Caco-2 (cell line): ENCODE measurements at regions of chr9 and their contacts with region 1.

Region 1: GRCh38 chr9:97038909-97039781 is at the start of gene CTSV:
- DNase-seq: peak; percentile 94 to 97
- H3K4me3 ChIP-seq: peak within 1 kb of the TSS; percentile 75
- H3K4me3 Mint-ChIP-seq: peak within 1 kb of the TSS; percentile 89
- H3K27ac Mint-ChIP-seq: peak within 1 kb of the TSS; percentile 92
- H3K4me1 ChIP-seq: peaks cover 29% of the 10 kb centered on the region
- H3K4me1 Mint-ChIP-seq: peaks cover 17% of the 10 kb centered on the region
- H3K27me3 ChIP-seq: no peaks in the 10 kb centered on the region
- H3K27me3 Mint-ChIP-seq: no peaks in the 10 kb centered on the region
- CTCF ChIP-seq: no peak
- total RNA-seq, gene CTSV: 110 and 127 TPM in 2 replicates

Region 2: GRCh38 chr9:97062417-97062985 is 23.4 kb after region 1 on chr9:
- CTCF ChIA-PET with region 1: no interaction called
- POLR2A ChIA-PET with region 1: interaction called, 5 read pairs
- intact Hi-C with region 1: loop called (anchors 1 kb)
- DNase-seq: peak; percentile 65 to 67
- H3K4me3 ChIP-seq: no peak overlapping the region
- H3K4me3 Mint-ChIP-seq: no peak overlapping the region
- H3K27ac Mint-ChIP-seq: peak overlapping the region; percentile 58
- H3K4me1 ChIP-seq: peaks cover 27% of the 10 kb centered on the region
- H3K4me1 Mint-ChIP-seq: peaks cover 6% of the 10 kb centered on the region
- H3K27me3 ChIP-seq: no peaks in the 10 kb centered on the region
- H3K27me3 Mint-ChIP-seq: no peaks in the 10 kb centered on the region
- CTCF ChIP-seq: no peak

Region 3: GRCh38 chr9:97076238-97076637 is 37.1 kb after region 1 on chr9:
- CTCF ChIA-PET with region 1: no interaction called
- POLR2A ChIA-PET with region 1: no interaction called
- intact Hi-C with region 1: no loop called
- DNase-seq: no peak
- H3K4me3 ChIP-seq: no peak overlapping the region
- H3K4me3 Mint-ChIP-seq: no peak overlapping the region
- H3K27ac Mint-ChIP-seq: no peak overlapping the region
- H3K4me1 ChIP-seq: peaks cover 14% of the 10 kb centered on the region
- H3K4me1 Mint-ChIP-seq: peaks cover 22% of the 10 kb centered on the region
- H3K27me3 ChIP-seq: no peaks in the 10 kb centered on the region
- H3K27me3 Mint-ChIP-seq: no peaks in the 10 kb centered on the region
- CTCF ChIP-seq: no peak

Region 4: GRCh38 chr9:97109194-97109811 is 70.2 kb after region 1 on chr9:
- CTCF ChIA-PET with region 1: no interaction called
- POLR2A ChIA-PET with region 1: no interaction called
- intact Hi-C with region 1: loop called (anchors 1 kb)
- DNase-seq: peak; percentile 78 to 81
- H3K4me3 ChIP-seq: no peak overlapping the region
- H3K4me3 Mint-ChIP-seq: no peak overlapping the region
- H3K27ac Mint-ChIP-seq: no peak overlapping the region
- H3K4me1 ChIP-seq: no peaks in the 10 kb centered on the region
- H3K4me1 Mint-ChIP-seq: no peaks in the 10 kb centered on the region
- H3K27me3 ChIP-seq: no peaks in the 10 kb centered on the region
- H3K27me3 Mint-ChIP-seq: no peaks in the 10 kb centered on the region
- CTCF ChIP-seq: peak; percentile 69 to 86